ENCODE measurements at regions of chr3 and their contacts with region 1.

Region 1: DNA sequence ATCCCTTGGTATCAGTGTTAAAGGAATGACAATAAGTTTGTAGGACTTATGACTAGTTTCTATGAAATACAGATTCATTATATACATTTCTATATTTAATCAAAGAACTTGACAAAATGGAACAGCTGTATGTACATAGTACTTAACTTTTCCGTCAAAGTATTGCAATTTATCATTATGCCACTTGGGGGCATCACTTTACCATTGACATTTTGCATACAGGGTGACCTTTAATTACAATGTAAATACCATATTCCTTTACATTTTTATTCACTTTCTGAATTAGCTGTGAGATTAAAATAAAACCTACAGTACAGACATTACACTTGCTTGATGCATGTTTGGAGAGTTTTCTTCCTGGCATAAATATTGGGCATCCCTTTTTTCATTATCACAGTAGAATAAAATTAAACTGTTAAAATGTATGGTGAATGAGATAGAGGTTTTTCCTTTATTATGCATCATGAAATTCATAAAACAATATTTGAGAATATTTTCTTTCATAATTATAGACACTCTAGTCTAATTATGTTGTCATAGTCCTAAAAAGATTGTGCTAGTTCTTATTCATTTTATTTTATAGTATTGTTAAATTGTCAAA is 6.9 kb downstream of the NEK11 start:
- DNase-seq: peak; percentile 54
- ATAC-seq: peak; percentile 72
- H3K4me3 Mint-ChIP-seq: no peak overlapping the region
- H3K27ac Mint-ChIP-seq: no peak overlapping the region
- H3K4me1 Mint-ChIP-seq: no peaks in the 10 kb centered on the region
- H3K27me3 Mint-ChIP-seq: no peaks in the 10 kb centered on the region

Region 2: GRCh38 chr3:130621824-130622223 is 411.8 kb before region 1 on chr3:
- CTCF ChIA-PET with region 1: no interaction called
- POLR2A ChIA-PET with region 1: no interaction called
- DNase-seq: no peak
- ATAC-seq: no peak
- H3K4me3 Mint-ChIP-seq: no peak overlapping the region
- H3K27ac Mint-ChIP-seq: no peak overlapping the region
- H3K4me1 Mint-ChIP-seq: no peaks in the 10 kb centered on the region
- H3K27me3 Mint-ChIP-seq: peaks cover 1% of the 10 kb centered on the region

Region 3: GRCh38 chr3:131153505-131153904 is 119.9 kb after region 1 on chr3:
- CTCF ChIA-PET with region 1: no interaction called
- POLR2A ChIA-PET with region 1: no interaction called
- DNase-seq: no peak
- ATAC-seq: no peak
- H3K4me3 Mint-ChIP-seq: no peak overlapping the region
- H3K27ac Mint-ChIP-seq: no peak overlapping the region
- H3K4me1 Mint-ChIP-seq: no peaks in the 10 kb centered on the region
- H3K27me3 Mint-ChIP-seq: peaks cover 5% of the 10 kb centered on the region

Region 4: DNA sequence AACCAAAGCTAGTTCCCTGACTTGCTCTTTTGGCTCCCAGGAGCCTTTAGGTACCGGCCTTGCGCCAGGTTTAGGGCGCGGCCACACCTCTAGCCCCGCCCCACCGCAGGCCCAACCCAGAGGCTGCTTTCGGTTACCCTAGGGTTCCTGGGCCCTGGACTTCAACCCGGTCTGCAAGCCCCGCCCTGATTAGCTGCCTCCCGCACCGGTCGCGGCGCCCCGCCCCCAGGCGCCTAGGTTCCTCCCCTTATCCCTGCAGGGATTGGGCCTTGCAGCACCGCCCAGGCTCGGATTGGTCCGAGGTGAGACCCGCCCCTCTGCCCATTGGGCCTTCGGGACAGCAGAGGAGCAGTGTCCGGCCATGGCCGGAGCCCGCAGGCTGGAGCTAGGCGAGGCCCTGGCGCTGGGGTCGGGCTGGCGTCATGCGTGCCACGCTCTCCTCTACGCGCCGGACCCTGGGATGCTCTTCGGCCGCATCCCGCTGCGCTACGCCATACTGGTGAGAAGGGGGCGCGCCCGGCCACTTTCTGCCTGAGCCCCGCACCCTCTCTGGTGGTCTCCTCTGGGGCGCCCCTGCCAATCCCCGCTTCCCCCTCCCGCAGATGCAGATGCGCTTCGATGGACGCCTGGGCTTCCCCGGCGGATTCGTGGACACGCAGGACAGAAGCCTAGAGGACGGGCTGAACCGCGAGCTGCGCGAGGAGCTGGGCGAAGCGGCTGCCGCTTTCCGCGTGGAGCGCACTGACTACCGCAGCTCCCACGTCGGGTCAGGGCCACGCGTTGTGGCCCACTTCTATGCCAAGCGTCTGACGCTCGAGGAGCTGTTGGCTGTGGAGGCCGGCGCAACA is 348.1 kb after region 1 on chr3 and contains the start of gene NUDT16:
- CTCF ChIA-PET with region 1: interaction called, 11 read pairs
- POLR2A ChIA-PET with region 1: no interaction called
- DNase-seq: peak; percentile 99
- ATAC-seq: peak; percentile 99
- H3K4me3 Mint-ChIP-seq: peak within 1 kb of the TSS; percentile 94
- H3K27ac Mint-ChIP-seq: peak within 1 kb of the TSS; percentile 94
- H3K4me1 Mint-ChIP-seq: peaks cover 25% of the 10 kb centered on the region
- H3K27me3 Mint-ChIP-seq: no peaks in the 10 kb centered on the region
- total RNA-seq, gene NUDT16: 7.8 to 8.3 TPM

Measured in activated CD8-positive, alpha-beta T cell treated with anti-CD3 and anti-CD28 coated beads, Interleukin-2, amount 10 ng/mL, durations not matched to agents 7 days and 5 days (primary cell).